ENCODE measurements at regions of chr11 and their contacts with region 1.

Region 1: GRCh38 chr11:1546536-1547400 is 25.3 kb downstream of the DUSP8 start:
- DNase-seq: peak in 8 of 9 experiments; percentile 22 to 78 (median 60)
- ATAC-seq: peak; percentile 82
- H3K4me3 ChIP-seq: peak overlapping the region in 1 of 2 experiments; percentile 43
- H3K4me3 Mint-ChIP-seq: no peak overlapping the region
- H3K27ac ChIP-seq: no peak overlapping the region
- H3K27ac Mint-ChIP-seq: no peak overlapping the region
- H3K4me1 ChIP-seq: peaks cover 13% of the 10 kb centered on the region
- H3K4me1 Mint-ChIP-seq: peaks cover 4% of the 10 kb centered on the region
- H3K27me3 ChIP-seq: peaks cover 9 to 18% of the 10 kb centered on the region in 2 experiments
- H3K27me3 Mint-ChIP-seq: peaks cover 25% of the 10 kb centered on the region
- CTCF ChIP-seq: peak; percentile 82

Region 2: DNA sequence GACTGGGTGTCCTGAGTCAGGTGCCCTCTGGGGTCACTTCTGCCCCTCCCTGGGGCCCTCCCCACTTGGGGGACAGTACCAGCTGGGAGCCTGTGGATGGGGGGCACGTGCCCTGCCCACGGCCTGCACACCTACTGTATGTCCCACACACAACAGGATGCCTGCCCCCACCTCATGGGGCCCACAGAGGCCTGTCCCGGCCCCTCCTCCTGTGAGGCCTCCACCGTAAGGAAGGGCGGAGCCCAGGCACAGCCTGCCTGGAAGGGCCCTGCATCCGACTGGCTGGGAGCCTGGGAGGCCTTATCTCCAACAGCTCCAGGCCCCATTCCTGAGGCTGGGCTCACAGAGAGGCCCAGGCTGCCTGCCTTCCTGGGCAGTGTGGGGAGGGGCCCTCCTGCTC is 109.3 kb before region 1 on chr11:
- CTCF ChIA-PET with region 1: no interaction called
- POLR2A ChIA-PET with region 1: no interaction called
- intact Hi-C with region 1: no loop called
- DNase-seq: no peak
- ATAC-seq: no peak
- H3K4me3 ChIP-seq: no peak overlapping the region
- H3K4me3 Mint-ChIP-seq: no peak overlapping the region
- H3K27ac ChIP-seq: no peak overlapping the region
- H3K27ac Mint-ChIP-seq: no peak overlapping the region
- H3K4me1 ChIP-seq: no peaks in the 10 kb centered on the region
- H3K4me1 Mint-ChIP-seq: no peaks in the 10 kb centered on the region
- H3K27me3 ChIP-seq: peaks cover 0 to 3% of the 10 kb centered on the region in 2 experiments
- H3K27me3 Mint-ChIP-seq: no peaks in the 10 kb centered on the region
- CTCF ChIP-seq: no peak

Region 3: GRCh38 chr11:1564535-1565172 is 17.9 kb after region 1 on chr11:
- CTCF ChIA-PET with region 1: interaction called, 42 read pairs
- POLR2A ChIA-PET with region 1: interaction called, 4 read pairs
- intact Hi-C with region 1: no loop called
- DNase-seq: peak in 4 of 9 experiments; percentile 28 to 46 (median 32)
- ATAC-seq: no peak
- H3K4me3 ChIP-seq: no peak overlapping the region
- H3K4me3 Mint-ChIP-seq: no peak overlapping the region
- H3K27ac ChIP-seq: no peak overlapping the region
- H3K27ac Mint-ChIP-seq: no peak overlapping the region
- H3K4me1 ChIP-seq: peaks cover 20% of the 10 kb centered on the region
- H3K4me1 Mint-ChIP-seq: peaks cover 18% of the 10 kb centered on the region
- H3K27me3 ChIP-seq: no peaks in the 10 kb centered on the region
- H3K27me3 Mint-ChIP-seq: no peaks in the 10 kb centered on the region
- CTCF ChIP-seq: no peak

Region 4: DNA sequence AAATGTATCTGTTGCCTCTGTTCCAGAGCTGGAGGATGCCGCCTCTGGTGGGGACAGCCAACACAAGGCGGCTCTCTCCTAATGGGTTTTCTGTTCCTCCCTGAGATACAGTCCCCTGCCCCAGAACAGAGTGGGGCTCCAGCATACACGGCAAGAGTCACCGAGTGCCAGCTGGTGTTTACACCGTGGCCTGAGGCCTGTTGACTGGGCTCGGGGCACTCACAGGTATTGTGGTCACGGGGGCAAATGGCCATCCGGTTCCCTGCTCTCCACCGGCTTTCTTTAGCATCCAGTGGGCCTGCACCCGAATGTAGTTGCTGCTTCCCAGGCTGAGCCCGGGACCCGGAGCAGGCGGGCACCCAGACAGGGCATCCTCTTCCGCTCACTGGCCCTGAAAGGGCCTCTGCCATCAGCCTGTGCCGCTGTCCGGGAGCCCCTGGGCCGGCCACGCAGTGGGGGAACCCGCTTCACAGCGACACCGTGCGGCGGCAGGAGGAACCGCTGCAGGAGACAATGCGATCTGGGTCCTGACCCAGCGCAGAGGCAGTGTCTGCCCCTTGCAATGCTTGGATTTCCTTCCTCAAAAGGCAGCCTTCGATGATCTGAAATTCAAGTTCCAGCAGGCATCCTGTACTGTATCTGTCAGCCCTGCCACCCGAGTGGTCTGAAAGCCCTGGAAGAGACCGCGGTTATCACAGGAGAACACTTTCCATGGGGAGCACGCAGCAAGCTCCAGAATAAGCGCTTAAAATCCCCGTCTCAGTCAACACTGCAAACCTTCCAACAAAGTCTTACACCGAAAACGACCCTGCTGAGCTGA is 81.9 kb after region 1 on chr11:
- CTCF ChIA-PET with region 1: interaction called, 27 read pairs
- POLR2A ChIA-PET with region 1: no interaction called
- intact Hi-C with region 1: loop called in 1 of 2 experiments (anchors 1 kb)
- DNase-seq: peak; percentile 27 to 75 (median 62)
- ATAC-seq: peak; percentile 93
- H3K4me3 ChIP-seq: no peak overlapping the region
- H3K4me3 Mint-ChIP-seq: no peak overlapping the region
- H3K27ac ChIP-seq: no peak overlapping the region
- H3K27ac Mint-ChIP-seq: no peak overlapping the region
- H3K4me1 ChIP-seq: peaks cover 12% of the 10 kb centered on the region
- H3K4me1 Mint-ChIP-seq: peaks cover 6% of the 10 kb centered on the region
- H3K27me3 ChIP-seq: peaks cover 6 to 10% of the 10 kb centered on the region in 2 experiments
- H3K27me3 Mint-ChIP-seq: peaks cover 30% of the 10 kb centered on the region
- CTCF ChIP-seq: peak; percentile 89

Region 5: GRCh38 chr11:1640076-1640946 is 93.5 kb after region 1 on chr11:
- CTCF ChIA-PET with region 1: interaction called, 10 read pairs
- POLR2A ChIA-PET with region 1: no interaction called
- intact Hi-C with region 1: no loop called
- DNase-seq: peak in 6 of 9 experiments; percentile 9 to 59 (median 32)
- ATAC-seq: no peak
- H3K4me3 ChIP-seq: no peak overlapping the region
- H3K4me3 Mint-ChIP-seq: no peak overlapping the region
- H3K27ac ChIP-seq: no peak overlapping the region
- H3K27ac Mint-ChIP-seq: no peak overlapping the region
- H3K4me1 ChIP-seq: no peaks in the 10 kb centered on the region
- H3K4me1 Mint-ChIP-seq: no peaks in the 10 kb centered on the region
- H3K27me3 ChIP-seq: peaks cover 0 to 2% of the 10 kb centered on the region in 2 experiments
- H3K27me3 Mint-ChIP-seq: peaks cover 24% of the 10 kb centered on the region
- CTCF ChIP-seq: peak; percentile 77

Measured in CD8-positive, alpha-beta T cell (primary cell).